ENCODE measurements at regions of chr2 and their contacts with region 1.

Region 1: GRCh38 chr2:204871231-204871953 is 326.1 kb downstream of the PARD3B start:
- DNase-seq: peak; percentile 47
- H3K4me3 Mint-ChIP-seq: no peak overlapping the region
- H3K27ac Mint-ChIP-seq: peak overlapping the region; percentile 7
- H3K4me1 Mint-ChIP-seq: peaks cover 17% of the 10 kb centered on the region
- H3K27me3 Mint-ChIP-seq: no peaks in the 10 kb centered on the region
- CTCF ChIP-seq: peak; percentile 30

Region 2: GRCh38 chr2:205024822-205025518 is 153.6 kb after region 1 on chr2:
- CTCF ChIA-PET with region 1: no interaction called
- POLR2A ChIA-PET with region 1: no interaction called
- intact Hi-C with region 1: no loop called
- DNase-seq: peak; percentile 95
- H3K4me3 Mint-ChIP-seq: peak overlapping the region; percentile 33
- H3K27ac Mint-ChIP-seq: peak overlapping the region; percentile 67
- H3K4me1 Mint-ChIP-seq: peaks cover 18% of the 10 kb centered on the region
- H3K27me3 Mint-ChIP-seq: no peaks in the 10 kb centered on the region
- CTCF ChIP-seq: no peak

Region 3: DNA sequence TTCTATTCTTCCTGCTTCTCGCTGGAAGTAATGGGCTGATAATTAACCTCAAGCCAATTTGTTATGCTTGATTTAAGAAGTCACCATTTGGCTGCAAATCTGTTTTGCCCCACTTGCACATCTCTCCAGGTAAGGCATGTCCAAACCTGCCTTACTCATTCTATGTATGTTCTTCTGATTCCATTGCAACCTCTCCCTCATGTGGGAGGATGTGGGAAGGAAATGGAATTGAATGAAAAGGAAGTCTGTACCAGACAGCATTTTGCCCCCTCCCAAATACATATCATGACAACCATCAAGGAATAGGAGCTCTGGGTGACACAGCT is 942.6 kb after region 1 on chr2:
- CTCF ChIA-PET with region 1: interaction called, 3 read pairs
- POLR2A ChIA-PET with region 1: no interaction called
- intact Hi-C with region 1: loop called (anchors 5 kb)
- DNase-seq: peak; percentile 38
- H3K4me3 Mint-ChIP-seq: no peak overlapping the region
- H3K27ac Mint-ChIP-seq: no peak overlapping the region
- H3K4me1 Mint-ChIP-seq: peaks cover 5% of the 10 kb centered on the region
- H3K27me3 Mint-ChIP-seq: no peaks in the 10 kb centered on the region
- CTCF ChIP-seq: no peak